ENCODE measurements at regions of chr12 and their contacts with region 1.

Region 1: GRCh38 chr12:115946867-115947696 is 330.4 kb downstream of the MED13L start:
- DNase-seq: peak; percentile 57
- ATAC-seq: peak; percentile 23
- H3K4me3 ChIP-seq: no peak overlapping the region
- H3K27ac ChIP-seq: no peak overlapping the region
- H3K4me1 ChIP-seq: no peaks in the 10 kb centered on the region
- H3K27me3 ChIP-seq: no peaks in the 10 kb centered on the region
- CTCF ChIP-seq: peak; percentile 91

Region 2: DNA sequence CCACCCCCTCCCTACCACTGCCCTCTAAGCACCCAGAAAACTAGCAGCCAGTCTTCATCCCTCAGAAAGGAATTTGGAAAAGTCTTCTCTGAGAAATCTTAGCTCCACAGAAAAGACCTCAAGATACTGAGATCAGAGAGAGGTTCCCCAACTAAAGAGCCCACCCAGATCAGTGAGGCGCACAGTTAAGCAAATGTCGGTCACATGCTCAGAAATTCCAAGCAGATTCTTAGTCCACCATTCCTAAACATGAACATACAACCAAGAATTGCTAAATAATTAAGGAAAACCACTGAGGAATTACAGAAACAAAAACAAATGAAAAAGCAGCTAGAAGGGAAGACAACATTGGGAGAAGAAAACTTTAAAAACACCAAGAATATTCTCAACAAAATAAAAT is 298.1 kb after region 1 on chr12:
- CTCF ChIA-PET with region 1: interaction called, 13 read pairs
- POLR2A ChIA-PET with region 1: no interaction called
- intact Hi-C with region 1: no loop called
- DNase-seq: no peak
- ATAC-seq: no peak
- H3K4me3 ChIP-seq: no peak overlapping the region
- H3K27ac ChIP-seq: no peak overlapping the region
- H3K4me1 ChIP-seq: peaks cover 18% of the 10 kb centered on the region; the same call in 1 of the 2 replicates
- H3K27me3 ChIP-seq: no peaks in the 10 kb centered on the region
- CTCF ChIP-seq: no peak

Measured in PC-3 (cell line).